Activated T-helper 2 cell treated with anti-CD3 and anti-CD28 coated beads, Interferon-gamma antibody, Interleukin-2, Interleukin-4, amounts not matched to agents 10 μg/mL and 5 μg/mL and 100 μg/mL, durations not matched to agents 14 hours and 24 hours and 36 hours (primary cell): ENCODE measurements at regions of chr19 and their contacts with region 1.

Region 1: DNA sequence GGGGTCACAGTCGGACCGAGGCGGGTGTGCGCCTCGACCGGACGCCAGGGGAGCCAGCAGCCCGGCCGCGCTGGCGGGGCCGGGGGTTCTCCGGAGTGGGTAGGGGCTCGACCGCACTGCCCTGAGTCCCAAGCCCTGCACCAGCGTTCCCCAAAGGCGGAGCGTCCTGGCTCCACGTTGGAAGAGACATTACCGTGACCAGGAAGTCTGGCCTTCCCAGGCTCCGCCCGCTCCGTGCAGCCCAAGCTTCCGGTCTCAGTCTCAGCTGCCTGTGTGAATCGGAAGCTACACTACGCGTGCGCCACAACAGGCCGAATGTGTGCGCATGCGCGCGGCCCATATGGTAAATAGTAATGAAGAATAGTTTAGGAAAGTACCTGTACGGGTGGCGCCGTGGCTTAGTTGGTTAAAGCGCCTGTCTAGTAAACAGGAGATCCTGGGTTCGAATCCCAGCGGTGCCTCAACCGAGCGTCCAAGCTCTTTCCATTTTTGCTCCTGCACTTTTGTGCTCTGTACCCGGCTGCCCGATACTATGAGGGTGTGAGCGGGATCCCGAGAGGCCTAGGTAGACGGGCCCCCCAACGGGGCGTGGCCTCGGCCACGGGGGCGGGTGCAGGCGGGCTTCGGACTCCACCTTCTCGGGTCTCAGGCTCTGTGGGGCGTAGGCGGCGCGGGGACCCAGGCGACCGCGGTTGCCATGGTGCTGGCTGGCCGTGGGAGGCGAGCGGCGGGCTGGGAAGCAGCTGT is 17.3 kb upstream of the LRP3 start:
- DNase-seq: peak; percentile 97
- H3K4me3 Mint-ChIP-seq: peak overlapping the region; percentile 87
- H3K27ac Mint-ChIP-seq: peak overlapping the region; percentile 91
- H3K4me1 Mint-ChIP-seq: peaks cover 24% of the 10 kb centered on the region
- H3K27me3 Mint-ChIP-seq: peaks cover 5% of the 10 kb centered on the region

Region 2: GRCh38 chr19:32691291-32691951 is 485.4 kb before region 1 on chr19 and contains the start of gene NUDT19:
- intact Hi-C with region 1: loop called (anchors 5 kb)
- DNase-seq: peak; percentile 78
- H3K4me3 Mint-ChIP-seq: peak within 1 kb of the TSS; percentile 95
- H3K27ac Mint-ChIP-seq: peak within 1 kb of the TSS; percentile 94
- H3K4me1 Mint-ChIP-seq: peaks cover 42% of the 10 kb centered on the region
- H3K27me3 Mint-ChIP-seq: no peaks in the 10 kb centered on the region
- total RNA-seq, gene NUDT19: 25.0 and 25.6 TPM in 2 replicates

Region 3: DNA sequence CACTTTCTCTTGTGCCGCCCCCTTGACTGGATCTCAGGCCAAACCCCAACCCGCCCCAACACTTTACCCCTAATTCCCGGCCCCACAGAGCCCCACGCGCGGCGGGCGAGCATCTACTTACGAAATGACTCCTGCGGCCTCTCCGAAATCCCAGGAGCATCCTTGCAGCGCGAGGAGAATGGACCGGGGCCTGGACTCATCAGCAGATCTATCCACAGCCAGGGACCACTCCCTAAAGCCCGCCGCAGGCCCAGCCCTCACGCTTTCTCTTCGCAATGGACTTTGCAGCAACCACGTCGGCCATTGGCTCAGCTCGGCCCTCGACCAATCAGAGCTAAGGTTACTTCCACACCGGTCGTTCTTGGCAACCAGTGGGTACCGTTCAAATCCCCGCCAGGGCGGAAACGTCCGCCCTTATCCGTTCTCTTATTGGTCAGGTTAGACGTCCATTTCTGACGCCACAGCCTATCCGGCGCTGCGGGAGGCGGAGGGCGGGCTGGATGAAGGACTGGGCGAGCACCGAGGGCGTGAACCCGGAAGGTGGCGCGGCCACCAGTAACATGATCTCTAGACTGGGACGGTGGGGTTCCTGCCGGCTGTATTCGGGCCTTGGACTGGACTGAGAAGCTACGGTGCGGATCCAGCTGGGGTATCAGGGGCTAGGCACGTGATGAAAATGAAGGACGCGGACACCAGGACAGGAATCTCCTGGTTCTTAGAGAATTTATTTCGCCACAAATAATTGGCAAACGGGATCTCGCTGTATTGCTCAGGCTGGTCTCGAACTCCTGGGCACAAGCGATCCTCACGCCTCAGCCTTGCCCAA is 204.9 kb before region 1 on chr19 and contains the starts of genes CEP89 and FAAP24:
- intact Hi-C with region 1: loop called (anchors 2 kb)
- DNase-seq: peak; percentile 99
- H3K4me3 Mint-ChIP-seq: peak within 1 kb of the TSS; percentile 98
- H3K27ac Mint-ChIP-seq: peak within 1 kb of the TSS; percentile 94
- H3K4me1 Mint-ChIP-seq: peaks cover 8% of the 10 kb centered on the region
- H3K27me3 Mint-ChIP-seq: no peaks in the 10 kb centered on the region
- total RNA-seq, gene CEP89: 17.3 and 18.0 TPM in 2 replicates
- total RNA-seq, gene FAAP24: 9.8 and 10.7 TPM in 2 replicates

Region 4: DNA sequence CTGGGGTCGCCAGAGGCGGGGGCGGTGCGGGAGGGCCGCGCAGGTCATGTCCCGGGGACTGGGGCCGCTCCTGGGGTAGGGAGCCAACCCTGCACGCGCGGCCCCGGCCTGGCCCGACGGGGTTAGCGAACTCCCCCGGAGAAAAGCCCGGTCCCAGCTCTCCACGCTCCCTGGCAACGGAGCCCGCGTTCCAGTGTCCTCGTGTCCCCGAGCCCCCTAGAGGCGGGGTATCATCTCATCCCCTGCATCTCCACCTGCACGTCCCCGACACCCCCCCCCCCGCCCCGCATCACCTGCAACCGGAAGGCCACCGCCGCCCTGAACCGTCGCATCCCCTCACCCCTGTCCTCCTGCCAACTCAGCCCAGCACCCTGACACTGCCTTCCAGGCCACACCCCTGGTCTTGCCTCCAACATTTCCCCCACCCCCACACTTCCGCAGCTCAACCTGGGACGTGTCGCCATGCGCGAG is 42.2 kb before region 1 on chr19:
- intact Hi-C with region 1: loop called (anchors 2 kb)
- DNase-seq: peak; percentile 40
- H3K4me3 Mint-ChIP-seq: peak overlapping the region; percentile 70
- H3K27ac Mint-ChIP-seq: peak overlapping the region; percentile 58
- H3K4me1 Mint-ChIP-seq: peaks cover 2% of the 10 kb centered on the region
- H3K27me3 Mint-ChIP-seq: no peaks in the 10 kb centered on the region

Region 5: GRCh38 chr19:33143897-33144405 is 32.9 kb before region 1 on chr19:
- intact Hi-C with region 1: loop called (anchors 2 kb)
- DNase-seq: peak; percentile 51
- H3K4me3 Mint-ChIP-seq: no peak overlapping the region
- H3K27ac Mint-ChIP-seq: no peak overlapping the region
- H3K4me1 Mint-ChIP-seq: peaks cover 5% of the 10 kb centered on the region
- H3K27me3 Mint-ChIP-seq: peaks cover 7% of the 10 kb centered on the region

Region 6: DNA sequence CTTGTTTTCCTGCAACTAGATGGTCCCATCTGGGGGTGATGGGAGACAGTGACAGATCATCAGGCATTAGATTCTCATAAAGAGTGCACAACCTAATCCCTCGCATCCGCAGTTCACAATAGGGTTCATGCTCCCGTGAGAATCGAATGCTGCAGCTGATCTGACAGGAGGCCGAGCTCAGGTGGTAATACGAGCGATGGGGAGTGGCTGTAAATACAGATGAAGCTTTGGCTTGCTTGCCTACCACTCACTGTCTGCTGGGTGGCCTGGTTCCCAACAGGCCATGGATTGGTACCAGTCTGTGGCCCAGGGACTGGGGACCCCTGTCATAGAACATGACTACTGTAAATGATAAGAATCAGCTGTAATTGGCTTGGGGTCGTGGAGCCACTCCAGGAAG is 16.9 kb before region 1 on chr19:
- intact Hi-C with region 1: loop called (anchors 1 kb)
- DNase-seq: no peak
- H3K4me3 Mint-ChIP-seq: no peak overlapping the region
- H3K27ac Mint-ChIP-seq: peak overlapping the region; percentile 89
- H3K4me1 Mint-ChIP-seq: peaks cover 35% of the 10 kb centered on the region
- H3K27me3 Mint-ChIP-seq: no peaks in the 10 kb centered on the region